ENCODE measurements at regions of chr9 and their contacts with region 1.

Region 1: DNA sequence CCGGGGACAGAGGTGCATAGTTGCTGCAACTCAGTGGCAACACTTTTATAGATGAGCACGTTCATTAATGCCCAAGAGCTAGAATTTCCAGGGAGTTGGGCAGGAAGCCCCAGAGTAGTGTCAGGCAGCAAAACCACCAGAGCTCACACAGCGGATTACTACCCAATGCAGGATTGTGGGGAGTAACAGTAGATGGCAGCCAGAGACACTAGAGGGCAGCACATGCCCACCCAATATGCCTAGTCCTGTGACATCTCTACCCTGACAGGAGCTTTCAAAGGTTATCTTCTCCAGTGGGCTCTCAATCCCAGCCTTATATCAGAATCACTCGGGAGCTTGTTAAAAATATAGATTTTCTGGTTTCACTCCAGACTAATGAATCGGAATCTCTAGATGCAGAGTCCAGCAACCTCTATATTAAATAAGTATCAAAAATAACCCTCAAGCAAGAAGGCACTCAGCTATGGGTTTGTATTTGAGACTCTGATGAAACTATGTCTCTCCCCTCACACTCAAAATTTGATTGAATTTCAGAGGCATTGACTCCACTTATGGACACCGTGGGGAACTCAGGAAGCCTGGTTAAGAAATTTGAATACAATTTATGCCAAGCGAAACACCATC is 58.4 kb upstream of the PHF24 start:
- DNase-seq: peak; percentile 77
- H3K4me3 ChIP-seq: no peak overlapping the region
- H3K27ac ChIP-seq: no peak overlapping the region
- H3K4me1 ChIP-seq: no peaks in the 10 kb centered on the region
- H3K27me3 ChIP-seq: peaks cover 24 to 37% of the 10 kb centered on the region in 2 experiments
- CTCF ChIP-seq: peak; percentile 64 to 85
- POLR2A ChIP-seq: no peak

Region 2: DNA sequence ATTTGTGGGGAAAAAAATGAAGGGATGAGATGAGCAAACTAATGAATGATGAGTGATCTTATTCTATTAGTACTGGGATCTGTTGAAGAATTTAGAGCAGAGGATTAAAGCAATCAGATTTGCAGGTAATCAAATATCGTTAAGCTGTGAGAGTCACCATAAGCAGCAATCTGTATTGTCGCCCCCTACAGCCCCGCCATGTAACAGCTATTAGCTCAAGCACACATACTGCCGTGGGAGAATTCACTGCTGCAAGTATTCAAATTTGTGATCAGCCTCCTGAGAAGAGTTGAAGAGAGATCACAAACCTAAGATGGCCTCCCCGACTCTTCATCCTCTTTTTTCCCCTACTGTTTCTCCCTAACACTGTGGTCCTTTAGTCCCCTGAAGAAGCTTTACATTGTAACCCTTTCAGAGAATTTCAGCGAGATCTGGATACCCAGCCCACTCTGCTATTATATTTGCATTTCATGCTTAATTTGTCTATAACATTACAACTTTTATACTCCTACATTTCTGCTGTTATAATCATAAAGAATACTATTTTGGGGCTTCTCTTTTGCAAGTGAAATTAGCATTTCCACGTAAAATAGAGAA is 30.0 kb after region 1 on chr9:
- CTCF ChIA-PET with region 1: interaction called, 32 read pairs
- POLR2A ChIA-PET with region 1: no interaction called
- dilution Hi-C with region 1: no loop called
- intact Hi-C with region 1: no loop called
- DNase-seq: peak; percentile 32
- H3K4me3 ChIP-seq: no peak overlapping the region
- H3K27ac ChIP-seq: no peak overlapping the region
- H3K4me1 ChIP-seq: no peaks in the 10 kb centered on the region
- H3K27me3 ChIP-seq: peaks cover 10 to 18% of the 10 kb centered on the region in 2 experiments
- CTCF ChIP-seq: peak; percentile 52 to 77
- POLR2A ChIP-seq: no peak

Region 3: GRCh38 chr9:35035851-35036701 is 136.4 kb after region 1 on chr9:
- CTCF ChIA-PET with region 1: interaction called, 8 read pairs
- POLR2A ChIA-PET with region 1: no interaction called
- dilution Hi-C with region 1: no loop called
- intact Hi-C with region 1: loop called (anchors 5 kb)
- DNase-seq: peak; percentile 44
- H3K4me3 ChIP-seq: peak overlapping the region in 2 of 3 experiments; percentile 7 to 26
- H3K27ac ChIP-seq: no peak overlapping the region
- H3K4me1 ChIP-seq: peaks cover 7% of the 10 kb centered on the region
- H3K27me3 ChIP-seq: no peaks in the 10 kb centered on the region
- CTCF ChIP-seq: no peak
- POLR2A ChIP-seq: no peak

Region 4: DNA sequence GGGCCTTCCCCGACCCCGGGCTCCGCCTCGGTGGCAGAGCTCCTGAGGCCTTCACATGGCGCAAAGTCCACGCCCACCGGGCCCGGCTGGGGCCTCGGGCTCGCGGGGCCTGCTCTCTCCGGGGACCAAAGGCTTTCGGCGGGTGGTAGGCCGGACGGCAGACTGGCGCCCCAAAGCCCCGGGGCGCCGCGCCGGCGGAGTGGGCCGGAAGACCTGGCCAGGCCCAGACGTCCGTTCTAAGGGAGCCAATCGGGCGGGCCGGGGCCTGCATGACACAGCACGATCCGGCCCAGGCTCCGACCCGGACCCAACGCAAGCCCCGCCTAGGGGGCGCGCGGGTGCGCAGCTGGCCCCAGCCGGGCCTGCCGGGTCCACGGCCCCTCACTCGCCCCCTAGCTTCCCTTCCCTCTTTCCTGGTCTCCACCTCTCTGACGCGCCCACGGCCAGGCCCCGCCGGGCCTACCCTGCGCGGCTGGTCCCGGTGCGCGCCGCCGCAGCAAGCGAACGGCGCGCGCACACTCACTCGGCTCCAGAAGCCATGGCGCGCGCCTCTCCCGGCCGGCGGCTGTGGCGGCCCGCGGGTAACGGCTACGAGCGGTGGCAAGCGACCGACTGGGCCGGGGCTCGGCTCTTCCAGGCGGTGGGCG is 172.3 kb after region 1 on chr9:
- CTCF ChIA-PET with region 1: interaction called, 18 read pairs
- POLR2A ChIA-PET with region 1: interaction called, 3 read pairs
- dilution Hi-C with region 1: no loop called
- intact Hi-C with region 1: no loop called
- DNase-seq: peak; percentile 85
- H3K4me3 ChIP-seq: peak overlapping the region; percentile 79 to 97 (median 96)
- H3K27ac ChIP-seq: peak overlapping the region; percentile 95
- H3K4me1 ChIP-seq: peaks cover 29% of the 10 kb centered on the region
- H3K27me3 ChIP-seq: no peaks in the 10 kb centered on the region
- CTCF ChIP-seq: peak; percentile 25 to 65
- POLR2A ChIP-seq: peak; percentile 51

Region 5: DNA sequence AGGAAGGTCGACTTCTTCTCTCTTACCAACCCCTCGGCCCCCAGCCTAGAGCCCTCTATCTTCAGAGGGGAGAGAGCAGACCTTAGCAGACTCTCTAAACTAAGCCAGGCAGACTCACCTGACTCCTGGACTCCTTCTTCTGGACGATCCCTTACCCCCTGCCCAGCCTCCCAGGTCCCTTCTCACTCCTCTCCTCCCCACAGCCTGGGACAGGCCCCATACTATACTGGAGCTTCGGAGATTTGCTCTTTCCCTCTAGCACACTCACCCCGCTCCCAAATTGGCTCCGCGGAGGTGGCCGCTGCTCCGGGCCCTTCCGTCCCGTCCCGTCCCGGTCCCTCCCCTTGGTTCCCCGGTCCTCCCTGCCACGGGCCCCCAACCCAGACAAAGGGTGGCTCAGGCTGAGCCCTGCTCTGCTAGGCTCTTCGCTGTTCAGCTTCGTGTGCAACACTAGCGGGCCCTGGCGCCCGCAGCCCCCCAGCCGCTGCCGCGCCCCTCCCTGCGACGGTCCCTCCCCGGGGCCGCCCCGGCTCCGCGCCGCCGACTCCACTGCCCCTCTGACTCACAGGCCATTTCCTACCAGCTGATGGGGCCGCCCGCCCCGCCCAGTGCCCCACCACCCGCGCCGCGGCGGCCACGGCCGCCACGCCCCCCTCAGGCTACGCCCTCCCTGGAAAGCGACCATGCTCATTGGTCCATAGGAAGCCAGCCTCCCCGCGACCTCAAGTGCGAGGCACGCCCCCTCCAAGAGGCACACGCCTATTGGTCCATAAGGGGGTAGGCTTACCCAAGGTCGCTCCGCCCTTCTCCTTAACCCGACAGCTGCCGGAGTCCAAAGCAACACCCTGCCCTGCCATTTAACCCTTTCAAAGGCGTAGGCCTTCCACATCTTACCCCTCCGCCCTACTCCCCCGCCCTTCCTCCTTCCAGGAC is 211.6 kb after region 1 on chr9:
- CTCF ChIA-PET with region 1: interaction called, 16 read pairs
- POLR2A ChIA-PET with region 1: no interaction called
- dilution Hi-C with region 1: no loop called
- intact Hi-C with region 1: loop called (anchors 5 kb)
- DNase-seq: peak; percentile 98
- H3K4me3 ChIP-seq: peak overlapping the region; percentile 45 to 85 (median 60)
- H3K27ac ChIP-seq: peak overlapping the region; percentile 92
- H3K4me1 ChIP-seq: peaks cover 47% of the 10 kb centered on the region
- H3K27me3 ChIP-seq: no peaks in the 10 kb centered on the region
- CTCF ChIP-seq: no peak
- POLR2A ChIP-seq: peak; percentile 72

Region 6: GRCh38 chr9:35136861-35137260 is 237.2 kb after region 1 on chr9:
- CTCF ChIA-PET with region 1: no interaction called
- POLR2A ChIA-PET with region 1: no interaction called
- dilution Hi-C with region 1: no loop called
- intact Hi-C with region 1: no loop called
- DNase-seq: no peak
- H3K4me3 ChIP-seq: no peak overlapping the region
- H3K27ac ChIP-seq: no peak overlapping the region
- H3K4me1 ChIP-seq: no peaks in the 10 kb centered on the region
- H3K27me3 ChIP-seq: no peaks in the 10 kb centered on the region
- CTCF ChIP-seq: no peak
- POLR2A ChIP-seq: no peak

Region 7: DNA sequence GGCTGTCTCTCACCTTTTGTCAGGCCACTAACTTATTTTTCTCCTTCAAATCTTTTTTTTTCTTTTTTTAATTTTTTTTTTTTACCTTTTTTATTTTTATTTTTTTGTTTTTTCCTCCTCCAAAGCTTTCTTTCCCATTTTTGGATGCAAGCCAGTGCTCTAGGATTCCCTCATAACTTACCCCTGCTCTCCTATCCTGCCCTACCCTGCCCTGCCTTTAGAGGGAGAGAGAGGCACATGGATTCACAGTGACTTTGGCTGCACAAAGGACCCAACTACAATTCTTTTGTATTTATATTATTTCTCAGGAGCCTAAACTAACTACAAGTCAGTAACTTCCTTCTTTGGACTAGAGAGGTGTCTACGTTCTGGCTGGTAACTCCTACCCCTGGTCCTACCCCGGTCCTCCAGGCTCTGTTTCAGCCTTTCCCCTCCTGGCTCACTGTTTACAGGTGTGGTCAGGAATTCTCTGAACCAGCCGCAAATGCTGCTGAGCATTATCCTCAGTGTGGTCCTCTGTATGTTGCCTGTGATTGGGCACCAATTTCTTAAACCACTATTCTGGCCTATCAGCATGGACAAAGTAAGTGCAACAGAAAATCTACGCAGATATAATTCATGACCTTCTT is 581.8 kb after region 1 on chr9:
- CTCF ChIA-PET with region 1: interaction called, 46 read pairs
- POLR2A ChIA-PET with region 1: no interaction called
- dilution Hi-C with region 1: no loop called
- intact Hi-C with region 1: loop called (anchors 1 kb)
- DNase-seq: peak; percentile 71
- H3K4me3 ChIP-seq: no peak overlapping the region
- H3K27ac ChIP-seq: no peak overlapping the region
- H3K4me1 ChIP-seq: peaks cover 5% of the 10 kb centered on the region
- H3K27me3 ChIP-seq: no peaks in the 10 kb centered on the region
- CTCF ChIP-seq: peak; percentile 75 to 80
- POLR2A ChIP-seq: no peak

Measured in endothelial cell of umbilical vein (primary cell).